ENCODE measurements at regions of chr7 and their contacts with region 1.

Region 1: GRCh38 chr7:74401137-74401859 is 52.4 kb upstream of the GTF2IRD1 start:
- DNase-seq: peak; percentile 71
- H3K4me3 Mint-ChIP-seq: no peak overlapping the region
- H3K27ac Mint-ChIP-seq: no peak overlapping the region
- H3K4me1 Mint-ChIP-seq: no peaks in the 10 kb centered on the region
- H3K27me3 Mint-ChIP-seq: no peaks in the 10 kb centered on the region
- CTCF ChIP-seq: peak; percentile 99

Region 2: DNA sequence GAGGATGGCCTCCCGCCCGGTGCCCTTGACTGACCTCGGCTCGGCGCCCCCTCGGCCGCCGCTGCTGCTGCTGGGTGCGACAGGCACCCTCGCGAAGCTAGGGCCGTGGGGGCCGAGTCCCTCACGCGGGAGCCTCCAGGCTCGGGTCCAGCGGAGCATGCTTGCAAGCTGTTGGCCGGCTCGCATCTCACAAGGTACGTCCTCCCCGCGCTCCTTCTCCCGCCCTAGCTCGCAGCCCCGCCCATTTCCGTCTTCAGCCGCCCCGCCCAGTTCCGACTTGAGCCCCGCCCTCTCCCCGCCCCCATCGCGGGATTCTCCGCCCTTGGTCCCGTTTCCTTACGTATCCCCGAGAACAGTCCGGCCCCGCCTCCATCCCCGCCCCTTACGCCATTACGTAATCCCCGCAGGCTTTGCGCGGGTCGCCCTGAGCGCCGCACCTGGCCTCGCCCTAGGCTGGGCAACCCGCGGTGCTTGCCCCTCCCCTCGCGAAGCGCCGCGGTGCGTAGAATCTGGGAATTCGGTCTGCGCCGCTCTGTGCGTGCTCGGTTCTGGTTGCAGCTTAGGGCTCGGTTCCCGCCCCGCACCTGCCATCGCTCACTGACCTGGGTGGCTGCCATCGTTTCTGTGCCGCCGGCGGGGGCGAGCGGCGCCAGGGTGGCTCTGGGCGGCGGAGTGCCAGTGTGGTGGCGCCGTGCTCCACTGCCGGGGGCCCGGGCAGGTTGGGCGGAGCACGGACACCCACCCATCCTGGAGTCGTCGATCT is 662.5 kb before region 1 on chr7 and contains the start of gene ABHD11:
- CTCF ChIA-PET with region 1: no interaction called
- POLR2A ChIA-PET with region 1: no interaction called
- intact Hi-C with region 1: no loop called
- DNase-seq: peak; percentile 94
- H3K4me3 Mint-ChIP-seq: peak within 1 kb of the TSS; percentile 91
- H3K27ac Mint-ChIP-seq: peak within 1 kb of the TSS; percentile 94
- H3K4me1 Mint-ChIP-seq: peaks cover 14% of the 10 kb centered on the region
- H3K27me3 Mint-ChIP-seq: no peaks in the 10 kb centered on the region
- CTCF ChIP-seq: no peak
- total RNA-seq, gene ABHD11: 15.3 and 18.9 TPM in 2 replicates

Region 3: GRCh38 chr7:74051629-74052410 is 349.5 kb before region 1 on chr7:
- CTCF ChIA-PET with region 1: interaction called, 3 read pairs
- POLR2A ChIA-PET with region 1: no interaction called
- intact Hi-C with region 1: loop called (anchors 5 kb)
- DNase-seq: peak; percentile 56
- H3K4me3 Mint-ChIP-seq: no peak overlapping the region
- H3K27ac Mint-ChIP-seq: no peak overlapping the region
- H3K4me1 Mint-ChIP-seq: no peaks in the 10 kb centered on the region
- H3K27me3 Mint-ChIP-seq: peaks cover 28% of the 10 kb centered on the region
- CTCF ChIP-seq: peak; percentile 52

Region 4: GRCh38 chr7:74193054-74193453 is 208.2 kb before region 1 on chr7:
- CTCF ChIA-PET with region 1: interaction called, 12 read pairs
- POLR2A ChIA-PET with region 1: no interaction called
- intact Hi-C with region 1: no loop called
- DNase-seq: no peak
- H3K4me3 Mint-ChIP-seq: no peak overlapping the region
- H3K27ac Mint-ChIP-seq: no peak overlapping the region
- H3K4me1 Mint-ChIP-seq: peaks cover 3% of the 10 kb centered on the region
- H3K27me3 Mint-ChIP-seq: no peaks in the 10 kb centered on the region
- CTCF ChIP-seq: no peak

Region 5: GRCh38 chr7:74254129-74254857 is 147.0 kb before region 1 on chr7 and contains the start of gene RFC2:
- CTCF ChIA-PET with region 1: interaction called, 10 read pairs
- POLR2A ChIA-PET with region 1: no interaction called
- intact Hi-C with region 1: no loop called
- DNase-seq: peak; percentile 93
- H3K4me3 Mint-ChIP-seq: peak within 1 kb of the TSS; percentile 97
- H3K27ac Mint-ChIP-seq: peak within 1 kb of the TSS; percentile 99
- H3K4me1 Mint-ChIP-seq: no peaks in the 10 kb centered on the region
- H3K27me3 Mint-ChIP-seq: no peaks in the 10 kb centered on the region
- CTCF ChIP-seq: no peak
- total RNA-seq, gene RFC2: 16.3 and 35.0 TPM in 2 replicates

Region 6: DNA sequence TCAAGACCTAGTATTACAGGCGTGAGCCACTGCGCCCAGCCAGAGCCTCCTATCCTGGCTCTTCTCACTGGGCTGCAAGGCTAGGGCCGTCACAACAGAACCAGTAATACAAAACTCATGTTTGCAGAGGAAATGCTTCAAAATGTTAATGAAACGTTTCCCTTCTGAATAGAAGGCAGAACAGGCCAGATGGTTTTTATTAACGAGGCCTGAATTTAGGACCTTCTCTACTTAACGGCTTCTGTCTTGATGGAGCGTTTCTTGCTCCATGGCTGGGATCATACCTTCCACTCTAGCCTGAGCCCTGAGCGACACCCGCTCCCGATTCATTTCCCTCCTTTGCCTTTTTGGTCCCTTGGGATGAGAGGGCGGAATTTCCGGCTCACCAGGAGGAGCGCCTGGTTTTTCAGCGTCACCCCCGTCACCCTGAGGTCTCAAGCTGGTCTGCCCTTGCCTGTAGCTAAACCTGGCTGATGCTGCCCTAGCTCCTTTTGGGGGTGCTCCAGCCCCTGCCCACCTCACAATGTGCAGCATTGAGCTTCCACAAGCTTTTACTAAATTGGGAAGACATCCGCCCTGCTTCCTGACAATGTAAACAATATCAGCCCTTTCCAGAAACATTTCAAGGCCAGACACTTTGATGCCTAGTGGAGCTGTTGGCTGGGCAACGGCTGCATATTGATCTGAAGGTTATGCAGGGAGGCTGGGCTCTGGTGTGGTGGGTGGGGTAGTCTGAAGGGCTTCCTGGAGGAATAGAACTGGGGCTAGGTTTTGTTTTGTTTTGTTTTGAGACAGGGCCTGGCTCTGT is 106.9 kb before region 1 on chr7:
- CTCF ChIA-PET with region 1: interaction called, 27 read pairs
- POLR2A ChIA-PET with region 1: no interaction called
- intact Hi-C with region 1: no loop called
- DNase-seq: no peak
- H3K4me3 Mint-ChIP-seq: no peak overlapping the region
- H3K27ac Mint-ChIP-seq: no peak overlapping the region
- H3K4me1 Mint-ChIP-seq: peaks cover 6% of the 10 kb centered on the region
- H3K27me3 Mint-ChIP-seq: no peaks in the 10 kb centered on the region
- CTCF ChIP-seq: no peak

Region 7: GRCh38 chr7:74412056-74412455 is 10.8 kb after region 1 on chr7:
- CTCF ChIA-PET with region 1: interaction called, 27 read pairs
- POLR2A ChIA-PET with region 1: no interaction called
- intact Hi-C with region 1: no loop called
- DNase-seq: no peak
- H3K4me3 Mint-ChIP-seq: no peak overlapping the region
- H3K27ac Mint-ChIP-seq: no peak overlapping the region
- H3K4me1 Mint-ChIP-seq: no peaks in the 10 kb centered on the region
- H3K27me3 Mint-ChIP-seq: no peaks in the 10 kb centered on the region
- CTCF ChIP-seq: no peak